MCF 10A (cell line): ENCODE measurements at regions of chr3 and their contacts with region 1.

Region 1: GRCh38 chr3:9384141-9384853 is 13.1 kb upstream of the SETD5 start:
- DNase-seq: no peak
- H3K4me3 Mint-ChIP-seq: no peak overlapping the region
- H3K27ac Mint-ChIP-seq: peak overlapping the region; percentile 73
- H3K4me1 Mint-ChIP-seq: no peaks in the 10 kb centered on the region
- H3K27me3 Mint-ChIP-seq: no peaks in the 10 kb centered on the region
- CTCF ChIP-seq: no peak

Region 2: DNA sequence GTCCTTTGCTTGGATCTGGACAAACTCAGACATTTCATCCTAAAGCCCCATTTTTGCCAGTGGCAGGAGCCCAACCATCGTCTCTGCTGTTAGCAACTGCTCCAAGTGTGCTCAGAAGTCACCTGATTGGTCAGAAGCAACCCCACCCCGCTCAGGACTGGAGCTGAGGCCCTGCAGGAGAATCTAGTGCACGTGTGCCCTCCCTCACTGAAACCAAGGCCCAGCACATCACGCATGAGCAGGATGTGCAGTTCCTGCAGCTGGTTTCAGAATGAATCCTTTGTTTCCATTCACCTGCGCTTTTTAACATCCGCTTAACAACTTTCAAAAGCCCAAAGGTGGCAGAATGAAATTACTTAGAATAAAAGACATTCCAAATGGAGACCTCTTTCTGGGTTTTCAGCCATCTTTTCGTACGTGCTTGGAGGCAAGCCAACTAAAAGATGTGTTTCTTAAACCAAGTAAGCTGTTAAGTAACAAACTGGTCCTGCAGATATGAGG is 216.0 kb before region 1 on chr3:
- CTCF ChIA-PET with region 1: no interaction called
- POLR2A ChIA-PET with region 1: no interaction called
- intact Hi-C with region 1: no loop called
- DNase-seq: no peak
- H3K4me3 Mint-ChIP-seq: no peak overlapping the region
- H3K27ac Mint-ChIP-seq: peak overlapping the region; percentile 84
- H3K4me1 Mint-ChIP-seq: peaks cover 12% of the 10 kb centered on the region
- H3K27me3 Mint-ChIP-seq: no peaks in the 10 kb centered on the region
- CTCF ChIP-seq: no peak

Region 3: GRCh38 chr3:9324944-9325343 is 59.4 kb before region 1 on chr3:
- CTCF ChIA-PET with region 1: no interaction called
- POLR2A ChIA-PET with region 1: no interaction called
- intact Hi-C with region 1: no loop called
- DNase-seq: no peak
- H3K4me3 Mint-ChIP-seq: no peak overlapping the region
- H3K27ac Mint-ChIP-seq: no peak overlapping the region
- H3K4me1 Mint-ChIP-seq: no peaks in the 10 kb centered on the region
- H3K27me3 Mint-ChIP-seq: no peaks in the 10 kb centered on the region
- CTCF ChIP-seq: no peak

Region 4: GRCh38 chr3:9373465-9373864 is 10.8 kb before region 1 on chr3:
- CTCF ChIA-PET with region 1: no interaction called
- POLR2A ChIA-PET with region 1: interaction called, 14 read pairs
- intact Hi-C with region 1: no loop called
- DNase-seq: no peak
- H3K4me3 Mint-ChIP-seq: no peak overlapping the region
- H3K27ac Mint-ChIP-seq: no peak overlapping the region
- H3K4me1 Mint-ChIP-seq: no peaks in the 10 kb centered on the region
- H3K27me3 Mint-ChIP-seq: no peaks in the 10 kb centered on the region
- CTCF ChIP-seq: no peak